Activated naive CD4-positive, alpha-beta T cell treated with anti-CD3 and anti-CD28 coated beads, Interleukin-2, amount 10 ng/mL, durations not matched to agents 7 days and 5 days (primary cell): ENCODE measurements at regions of chr13 and their contacts with region 1.

Region 1: DNA sequence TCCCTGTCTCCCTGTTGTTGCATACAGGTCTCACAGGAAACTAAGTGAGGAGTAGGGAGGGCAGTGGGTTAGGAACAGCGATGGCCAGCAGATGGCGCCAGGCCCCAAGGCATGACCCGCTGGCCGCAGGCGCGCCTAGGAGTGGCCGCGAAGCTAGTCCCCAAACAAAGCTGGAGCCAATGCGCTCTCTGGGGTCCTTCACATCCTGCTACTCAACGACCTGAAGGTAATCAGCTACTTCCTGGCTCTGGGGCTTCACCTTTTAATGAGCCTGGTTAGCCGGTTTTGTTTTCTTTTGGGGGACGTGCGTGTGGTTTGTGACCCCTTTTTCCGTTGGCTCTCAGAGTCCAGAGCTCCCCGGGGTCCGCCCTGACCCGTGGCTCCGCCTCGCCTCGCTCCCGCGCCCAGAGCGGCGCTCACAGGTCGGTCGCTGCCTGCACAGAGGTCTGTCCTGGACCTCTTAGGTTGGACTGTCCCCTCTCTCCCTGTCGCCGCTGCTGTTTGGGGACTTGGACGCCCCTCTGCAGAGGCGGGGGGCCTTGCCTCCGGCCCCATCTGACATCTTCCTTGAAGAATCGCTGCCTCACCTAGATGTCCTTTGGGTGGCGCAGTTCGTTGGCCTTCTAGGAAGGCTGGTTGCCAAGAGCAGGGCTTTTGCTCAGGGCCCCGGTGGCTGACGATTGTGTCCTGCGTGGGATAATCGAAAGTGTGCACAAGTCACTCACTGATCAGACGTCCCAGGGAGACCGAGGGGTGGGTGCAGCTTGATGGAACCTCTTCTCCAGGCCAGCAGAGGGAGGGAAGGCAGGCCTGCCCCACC is 62.1 kb upstream of the GTF3A start:
- DNase-seq: peak; percentile 85
- H3K4me3 Mint-ChIP-seq: no peak overlapping the region
- H3K27ac Mint-ChIP-seq: no peak overlapping the region
- H3K4me1 Mint-ChIP-seq: peaks cover 11% of the 10 kb centered on the region
- H3K27me3 Mint-ChIP-seq: peaks cover 59% of the 10 kb centered on the region

Region 2: DNA sequence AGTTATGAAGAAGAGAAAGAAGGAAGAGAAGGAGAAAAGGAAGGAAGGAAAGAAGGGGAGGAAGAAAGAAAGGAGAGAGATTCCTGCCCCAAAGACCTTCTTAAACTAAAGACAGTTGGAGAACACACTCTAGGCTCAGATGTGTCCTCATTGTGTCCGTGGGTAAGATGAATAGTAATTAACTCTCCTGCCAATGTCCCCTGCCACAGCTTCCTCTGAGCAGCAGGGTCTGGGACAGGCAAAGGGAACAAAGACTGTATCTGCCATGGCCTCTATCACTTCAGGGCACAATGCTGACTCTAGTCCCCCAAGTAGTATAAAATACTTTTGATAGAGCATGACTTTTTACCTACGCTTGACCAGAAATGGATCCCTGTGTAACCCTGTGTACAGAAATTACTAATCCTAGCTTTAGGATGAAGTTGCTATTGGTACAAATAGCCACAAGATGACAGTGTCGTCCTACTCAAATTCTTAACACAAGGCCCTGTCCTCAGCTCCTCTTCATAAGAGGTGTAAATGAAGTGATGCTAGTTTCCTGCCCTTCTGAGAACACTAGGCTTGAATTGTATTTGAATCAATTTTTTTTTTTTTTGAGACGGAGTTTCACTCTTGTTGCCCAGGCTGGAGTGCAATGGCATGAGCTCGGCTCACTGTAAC is 415.5 kb before region 1 on chr13:
- CTCF ChIA-PET with region 1: interaction called, 31 read pairs
- DNase-seq: no peak
- H3K4me3 Mint-ChIP-seq: no peak overlapping the region
- H3K27ac Mint-ChIP-seq: no peak overlapping the region
- H3K4me1 Mint-ChIP-seq: no peaks in the 10 kb centered on the region
- H3K27me3 Mint-ChIP-seq: peaks cover 4% of the 10 kb centered on the region

Region 3: GRCh38 chr13:26985285-26985878 is 376.9 kb before region 1 on chr13:
- CTCF ChIA-PET with region 1: interaction called, 136 read pairs
- DNase-seq: peak; percentile 81
- H3K4me3 Mint-ChIP-seq: no peak overlapping the region
- H3K27ac Mint-ChIP-seq: no peak overlapping the region
- H3K4me1 Mint-ChIP-seq: peaks cover 3% of the 10 kb centered on the region
- H3K27me3 Mint-ChIP-seq: peaks cover 8% of the 10 kb centered on the region

Region 4: GRCh38 chr13:27374650-27375049 is 12.4 kb after region 1 on chr13:
- CTCF ChIA-PET with region 1: interaction called, 25 read pairs
- DNase-seq: peak; percentile 68
- H3K4me3 Mint-ChIP-seq: no peak overlapping the region
- H3K27ac Mint-ChIP-seq: no peak overlapping the region
- H3K4me1 Mint-ChIP-seq: peaks cover 7% of the 10 kb centered on the region
- H3K27me3 Mint-ChIP-seq: peaks cover 37% of the 10 kb centered on the region

Region 5: DNA sequence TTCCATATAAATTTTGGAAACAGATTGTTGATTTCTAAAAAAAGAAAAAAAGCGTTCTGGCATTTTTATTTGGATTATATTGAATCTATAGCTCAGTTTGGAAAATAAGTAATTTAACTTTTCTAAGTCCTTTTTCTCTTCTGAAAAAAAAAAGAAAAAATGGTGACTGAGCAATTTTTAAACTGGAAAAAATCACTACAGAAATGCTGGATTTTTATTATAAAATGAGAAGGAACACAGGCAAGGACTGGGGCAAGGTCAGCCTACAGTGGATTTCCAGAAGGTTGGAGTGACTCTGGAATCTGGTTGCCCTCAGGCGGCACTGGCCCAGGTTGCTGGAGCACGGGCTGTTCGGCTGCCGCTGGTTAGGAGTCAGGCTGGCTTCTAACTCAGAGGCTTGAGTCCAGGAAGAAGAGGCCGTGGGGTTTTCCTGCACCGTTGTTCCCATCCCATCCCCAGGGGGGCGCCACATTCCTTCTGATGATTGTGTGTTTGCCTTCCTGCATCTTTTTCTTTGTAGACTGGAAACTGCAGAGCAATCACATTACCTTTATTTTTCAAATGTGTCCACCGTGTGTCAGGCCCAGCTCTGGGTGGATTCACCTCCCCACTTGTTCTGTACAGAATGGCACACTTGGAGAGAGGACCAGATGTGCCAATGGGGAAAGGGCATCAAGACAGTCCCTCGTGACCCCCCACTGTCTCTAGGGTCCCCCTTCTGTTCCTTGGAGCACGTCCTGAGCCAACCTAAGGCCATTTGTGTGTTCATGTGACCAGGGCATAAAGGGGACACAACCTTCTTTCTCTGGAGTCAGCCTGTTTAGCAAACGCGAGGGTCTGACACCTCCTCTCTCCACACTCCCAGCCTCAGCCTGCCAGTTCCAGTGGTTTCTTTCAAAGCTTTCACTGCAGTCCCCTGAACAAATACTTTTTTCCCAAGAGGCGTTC is 17.7 kb after region 1 on chr13:
- CTCF ChIA-PET with region 1: interaction called, 18 read pairs
- DNase-seq: peak; percentile 75
- H3K4me3 Mint-ChIP-seq: no peak overlapping the region
- H3K27ac Mint-ChIP-seq: no peak overlapping the region
- H3K4me1 Mint-ChIP-seq: peaks cover 2% of the 10 kb centered on the region
- H3K27me3 Mint-ChIP-seq: peaks cover 23% of the 10 kb centered on the region